Caco-2 (cell line): ENCODE measurements at regions of chr10 and their contacts with region 1.

Region 1: GRCh38 chr10:86755740-86756510 is 494 bp upstream of the BMPR1A start:
- DNase-seq: peak; percentile 88 to 92
- H3K4me3 ChIP-seq: peak overlapping the region; percentile 63
- H3K4me3 Mint-ChIP-seq: peak overlapping the region; percentile 76
- H3K27ac Mint-ChIP-seq: peak overlapping the region; percentile 85
- H3K4me1 ChIP-seq: peaks cover 28% of the 10 kb centered on the region
- H3K4me1 Mint-ChIP-seq: peaks cover 38% of the 10 kb centered on the region
- H3K27me3 ChIP-seq: no peaks in the 10 kb centered on the region
- H3K27me3 Mint-ChIP-seq: no peaks in the 10 kb centered on the region
- CTCF ChIP-seq: no peak

Region 2: DNA sequence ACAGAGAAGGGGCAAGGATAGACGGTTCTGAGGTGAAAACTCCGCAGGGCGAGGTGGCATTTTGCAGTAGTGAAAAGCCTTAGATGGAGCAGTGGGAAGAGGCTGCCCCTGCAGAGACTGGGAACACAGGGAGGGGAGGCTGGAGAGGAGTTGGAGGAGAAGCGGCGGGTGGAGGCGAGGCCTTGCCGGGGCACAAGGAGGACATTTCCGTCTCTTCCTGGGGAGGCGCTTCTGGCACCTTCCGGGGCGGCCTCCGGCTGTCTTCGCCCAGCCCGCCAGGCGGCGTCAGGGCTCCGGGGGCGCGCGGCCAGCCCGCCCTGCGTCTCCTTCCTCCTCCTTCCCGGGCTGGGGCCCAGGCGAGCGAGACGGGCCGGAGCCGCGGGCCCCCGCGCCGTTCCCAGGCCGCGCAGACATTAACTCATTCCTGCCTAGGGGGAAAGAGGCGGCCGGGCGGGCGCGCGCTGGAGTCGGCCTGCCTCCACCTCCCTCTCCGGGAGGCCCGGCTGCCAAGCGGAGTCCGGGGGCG is 44.9 kb before region 1 on chr10:
- CTCF ChIA-PET with region 1: interaction called, 4 read pairs
- POLR2A ChIA-PET with region 1: interaction called, 8 read pairs
- intact Hi-C with region 1: loop called (anchors 1 kb)
- DNase-seq: peak; percentile 88 to 96
- H3K4me3 ChIP-seq: peak overlapping the region; percentile 70
- H3K4me3 Mint-ChIP-seq: peak overlapping the region; percentile 86
- H3K27ac Mint-ChIP-seq: peak overlapping the region; percentile 88
- H3K4me1 ChIP-seq: peaks cover 11% of the 10 kb centered on the region
- H3K4me1 Mint-ChIP-seq: peaks cover 7% of the 10 kb centered on the region
- H3K27me3 ChIP-seq: no peaks in the 10 kb centered on the region
- H3K27me3 Mint-ChIP-seq: no peaks in the 10 kb centered on the region
- CTCF ChIP-seq: peak; percentile 84

Region 3: DNA sequence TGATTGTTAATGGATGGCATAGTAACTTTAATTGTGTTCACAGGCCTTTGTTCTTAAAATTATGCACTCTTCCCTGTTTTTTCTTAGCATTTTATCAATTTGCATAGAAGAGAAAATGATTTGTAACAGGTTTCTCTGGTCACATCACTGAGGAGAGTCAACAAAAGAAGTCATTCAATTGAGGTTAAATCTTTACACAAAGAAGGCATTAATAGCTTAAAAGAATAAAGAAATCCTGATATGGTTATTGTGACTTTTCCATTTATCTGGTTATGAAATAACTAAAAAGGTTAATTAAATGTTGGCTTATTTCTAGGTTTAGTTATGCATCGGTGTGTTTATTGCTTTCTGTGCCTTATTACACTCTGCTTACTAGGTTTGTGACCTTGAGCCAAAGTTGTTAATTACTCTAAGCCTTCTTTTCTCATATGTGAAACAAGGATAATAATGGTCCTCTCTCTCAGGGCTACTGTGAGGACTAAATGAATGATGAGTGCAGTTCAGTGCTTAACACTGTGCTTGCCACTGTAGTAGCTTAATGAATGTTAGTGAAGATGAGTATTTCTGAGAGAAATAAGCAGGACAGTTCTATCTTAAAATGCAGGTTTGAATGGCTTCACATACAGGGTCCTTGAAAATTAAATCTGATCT is 12.6 kb after region 1 on chr10:
- CTCF ChIA-PET with region 1: no interaction called
- POLR2A ChIA-PET with region 1: no interaction called
- intact Hi-C with region 1: no loop called
- DNase-seq: no peak
- H3K4me3 ChIP-seq: no peak overlapping the region
- H3K4me3 Mint-ChIP-seq: no peak overlapping the region
- H3K27ac Mint-ChIP-seq: no peak overlapping the region
- H3K4me1 ChIP-seq: no peaks in the 10 kb centered on the region
- H3K4me1 Mint-ChIP-seq: peaks cover 11% of the 10 kb centered on the region
- H3K27me3 ChIP-seq: no peaks in the 10 kb centered on the region
- H3K27me3 Mint-ChIP-seq: no peaks in the 10 kb centered on the region
- CTCF ChIP-seq: no peak

Region 4: GRCh38 chr10:86863484-86863842 is 107.5 kb after region 1 on chr10:
- CTCF ChIA-PET with region 1: no interaction called
- POLR2A ChIA-PET with region 1: no interaction called
- intact Hi-C with region 1: loop called (anchors 5 kb)
- DNase-seq: no peak
- H3K4me3 ChIP-seq: no peak overlapping the region
- H3K4me3 Mint-ChIP-seq: no peak overlapping the region
- H3K27ac Mint-ChIP-seq: no peak overlapping the region
- H3K4me1 ChIP-seq: peaks cover 43% of the 10 kb centered on the region
- H3K4me1 Mint-ChIP-seq: peaks cover 38% of the 10 kb centered on the region
- H3K27me3 ChIP-seq: no peaks in the 10 kb centered on the region
- H3K27me3 Mint-ChIP-seq: no peaks in the 10 kb centered on the region
- CTCF ChIP-seq: no peak

Region 5: DNA sequence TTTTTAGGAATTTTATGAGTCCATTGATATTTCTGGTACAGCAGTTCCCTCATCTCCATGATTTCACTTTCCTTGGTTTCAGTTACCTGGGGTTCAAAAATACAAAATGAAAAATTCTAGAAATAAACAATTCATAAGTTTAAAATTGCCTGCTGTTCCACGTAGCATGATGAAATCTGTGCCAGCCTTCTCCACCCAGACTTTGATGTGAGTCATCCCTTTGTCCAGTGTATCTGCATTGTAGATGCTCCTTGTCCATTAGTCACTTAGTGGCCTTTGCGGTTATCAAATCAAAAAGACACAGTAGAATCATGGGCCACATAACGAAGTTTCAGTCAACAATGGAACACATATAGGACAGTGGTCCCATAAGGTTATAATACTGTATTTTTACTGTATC is 1394.4 kb after region 1 on chr10:
- CTCF ChIA-PET with region 1: no interaction called
- POLR2A ChIA-PET with region 1: no interaction called
- intact Hi-C with region 1: no loop called
- DNase-seq: no peak
- H3K4me3 ChIP-seq: no peak overlapping the region
- H3K4me3 Mint-ChIP-seq: no peak overlapping the region
- H3K27ac Mint-ChIP-seq: no peak overlapping the region
- H3K4me1 ChIP-seq: no peaks in the 10 kb centered on the region
- H3K4me1 Mint-ChIP-seq: no peaks in the 10 kb centered on the region
- H3K27me3 ChIP-seq: no peaks in the 10 kb centered on the region
- H3K27me3 Mint-ChIP-seq: no peaks in the 10 kb centered on the region
- CTCF ChIP-seq: no peak